Adrenal gland (tissue), 19 donors: ENCODE measurements at regions of chr4 and their contacts with region 1.

Region 1: DNA sequence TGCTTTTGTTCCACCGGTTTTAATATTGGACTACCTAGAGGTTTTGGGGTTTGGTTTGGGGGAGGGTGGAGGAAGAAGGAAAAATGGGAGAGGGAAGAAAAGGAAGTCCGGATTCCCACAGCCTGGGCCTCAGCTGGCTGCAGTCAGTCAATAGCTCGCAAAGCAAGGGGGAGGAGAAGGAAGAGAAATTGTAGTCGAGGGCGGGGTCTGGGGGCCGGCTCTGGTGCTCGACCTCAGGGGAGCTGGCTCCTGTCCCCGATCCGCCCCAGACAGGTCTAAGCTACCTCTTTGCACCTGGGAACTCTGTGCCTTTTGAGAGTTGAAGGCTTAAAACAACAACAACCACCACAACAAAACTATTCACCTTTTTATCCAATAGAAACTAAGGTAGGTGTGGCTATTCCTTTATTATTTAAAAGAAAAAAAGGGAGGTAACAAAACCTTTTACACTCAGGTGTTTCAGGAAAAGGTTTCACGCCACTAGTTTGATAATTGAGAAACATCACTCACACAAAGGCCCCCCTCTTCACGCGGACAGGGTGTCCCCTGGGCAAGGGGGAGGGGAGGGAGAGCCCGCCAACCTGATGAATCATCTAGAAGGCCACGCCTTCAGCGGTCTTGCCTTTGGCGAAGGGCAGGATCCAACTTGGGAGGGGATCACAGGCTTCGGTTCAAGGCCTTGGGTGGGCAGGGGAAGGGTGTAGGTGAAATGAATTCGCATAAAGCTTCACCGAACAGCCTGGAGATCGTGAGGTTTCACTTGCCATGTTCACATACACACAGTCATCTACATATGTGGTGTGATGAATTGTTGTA is 1.6 kb upstream of the LNX1 start:
- DNase-seq: peak; percentile 62 to 82 (median 75)
- H3K4me3 ChIP-seq: peak overlapping the region in 2 of 4 donors; percentile 14 to 61
- H3K27ac ChIP-seq: peak overlapping the region in 4 of 5 donors; percentile 10 to 82 (median 58)
- H3K4me1 ChIP-seq: peaks cover 0 to 11% of the 10 kb centered on the region in 2 donors
- H3K27me3 ChIP-seq: no peaks in the 10 kb centered on the region
- CTCF ChIP-seq: no peak
- POLR2A ChIP-seq: no peak

Region 2: GRCh38 chr4:53267026-53267425 is 325.9 kb before region 1 on chr4:
- intact Hi-C with region 1: no loop called
- DNase-seq: no peak
- H3K4me3 ChIP-seq: no peak overlapping the region
- H3K27ac ChIP-seq: no peak overlapping the region
- H3K4me1 ChIP-seq: peaks cover 0 to 6% of the 10 kb centered on the region in 2 donors
- H3K27me3 ChIP-seq: no peaks in the 10 kb centered on the region
- CTCF ChIP-seq: no peak
- POLR2A ChIP-seq: no peak

Region 3: GRCh38 chr4:53490965-53491622 is 101.8 kb before region 1 on chr4:
- intact Hi-C with region 1: loop called in 1 of 2 experiments (anchors 10 kb)
- DNase-seq: peak in 6 of 7 donors; percentile 49 to 87 (median 72)
- H3K4me3 ChIP-seq: no peak overlapping the region
- H3K27ac ChIP-seq: peak overlapping the region in 2 of 5 donors; percentile 39 to 43
- H3K4me1 ChIP-seq: peaks cover 6 to 26% of the 10 kb centered on the region in 2 donors
- H3K27me3 ChIP-seq: no peaks in the 10 kb centered on the region
- CTCF ChIP-seq: peak; percentile 40 to 90 (median 74)
- POLR2A ChIP-seq: no peak